ENCODE measurements at regions of chr1 and their contacts with region 1.

Region 1: GRCh38 chr1:205528887-205529825 is 24.7 kb downstream of the CDK18 start:
- DNase-seq: peak; percentile 35
- H3K4me3 ChIP-seq: no peak overlapping the region
- H3K27ac ChIP-seq: no peak overlapping the region
- H3K4me1 ChIP-seq: no peaks in the 10 kb centered on the region
- H3K27me3 ChIP-seq: no peaks in the 10 kb centered on the region
- CTCF ChIP-seq: peak; percentile 72 to 91

Region 2: DNA sequence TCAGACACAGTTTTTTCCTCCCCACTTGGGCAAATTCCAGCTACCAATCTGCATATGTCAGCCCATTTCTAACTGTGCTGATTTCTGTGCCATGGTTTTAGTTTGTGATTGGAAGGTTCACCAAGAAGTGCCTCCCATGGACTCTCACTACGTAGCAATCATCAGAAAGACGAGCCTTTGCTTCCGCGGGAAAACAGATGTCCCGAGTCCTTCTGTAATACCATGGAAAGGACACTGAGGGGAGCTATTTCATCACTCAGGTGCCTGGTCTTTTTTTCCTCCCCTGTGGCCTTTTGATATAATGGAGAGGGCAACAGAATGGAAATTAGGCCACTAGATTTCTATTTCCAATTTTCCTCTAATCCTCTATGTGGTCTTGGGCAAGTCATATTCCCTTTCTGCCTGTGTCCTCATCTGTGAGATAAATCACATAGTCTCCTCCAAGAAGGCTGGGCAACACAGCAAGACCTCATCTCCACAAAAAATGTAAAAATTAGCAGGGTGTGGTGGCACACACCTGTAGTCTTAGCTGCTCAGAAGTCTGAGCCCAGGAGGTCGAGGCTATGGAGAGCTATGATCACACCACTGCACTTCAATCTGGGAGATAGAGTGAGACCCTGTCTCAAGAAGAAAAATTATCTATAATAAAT is 132.1 kb before region 1 on chr1:
- CTCF ChIA-PET with region 1: no interaction called
- dilution Hi-C with region 1: no loop called
- in situ Hi-C with region 1: loop called (anchors 5 to 10 kb)
- intact Hi-C with region 1: loop called (anchors 1 kb)
- DNase-seq: peak; percentile 52
- H3K4me3 ChIP-seq: no peak overlapping the region
- H3K27ac ChIP-seq: no peak overlapping the region
- H3K4me1 ChIP-seq: no peaks in the 10 kb centered on the region
- H3K27me3 ChIP-seq: no peaks in the 10 kb centered on the region
- CTCF ChIP-seq: peak; percentile 77 to 86

Region 3: GRCh38 chr1:205591522-205592351 is 62.6 kb after region 1 on chr1:
- CTCF ChIA-PET with region 1: no interaction called
- dilution Hi-C with region 1: no loop called
- in situ Hi-C with region 1: no loop called
- intact Hi-C with region 1: loop called (anchors 1 kb)
- DNase-seq: peak; percentile 98
- H3K4me3 ChIP-seq: peak overlapping the region in 1 of 3 experiments; percentile 25
- H3K27ac ChIP-seq: peak overlapping the region; percentile 26
- H3K4me1 ChIP-seq: peaks cover 21% of the 10 kb centered on the region
- H3K27me3 ChIP-seq: no peaks in the 10 kb centered on the region
- CTCF ChIP-seq: peak; percentile 90 to 99